ENCODE measurements at regions of chr22 and their contacts with region 1.

Region 1: GRCh38 chr22:35627264-35628041 is 10.3 kb upstream of the MB start:
- DNase-seq: peak; percentile 76
- H3K4me3 ChIP-seq: peak overlapping the region; percentile 66
- CTCF ChIP-seq: peak; percentile 69

Region 2: DNA sequence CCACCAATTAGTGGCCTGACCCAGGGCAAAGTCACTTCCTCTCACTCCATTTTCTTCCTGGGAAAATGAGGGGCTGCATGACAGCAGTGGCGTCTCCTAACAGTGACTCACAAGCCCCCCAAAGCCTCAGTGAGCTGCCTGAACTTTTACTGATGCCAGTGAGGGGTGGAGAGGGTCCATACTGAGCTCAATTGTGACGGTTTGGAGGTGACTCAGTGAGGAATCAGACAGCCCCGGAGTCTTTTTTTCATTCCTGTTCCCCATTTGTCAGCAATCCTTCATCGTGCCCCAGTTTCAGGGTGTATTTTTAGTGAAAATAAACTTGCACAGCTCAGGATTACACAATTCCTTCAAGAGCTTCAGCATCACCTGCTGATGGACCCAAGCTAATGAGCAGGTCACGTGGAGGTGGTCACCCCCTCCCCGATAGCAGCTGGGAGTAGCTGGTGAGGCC is 116.9 kb before region 1 on chr22:
- CTCF ChIA-PET with region 1: no interaction called
- POLR2A ChIA-PET with region 1: no interaction called
- DNase-seq: peak; percentile 12
- H3K4me3 ChIP-seq: no peak overlapping the region
- CTCF ChIP-seq: no peak

Region 3: DNA sequence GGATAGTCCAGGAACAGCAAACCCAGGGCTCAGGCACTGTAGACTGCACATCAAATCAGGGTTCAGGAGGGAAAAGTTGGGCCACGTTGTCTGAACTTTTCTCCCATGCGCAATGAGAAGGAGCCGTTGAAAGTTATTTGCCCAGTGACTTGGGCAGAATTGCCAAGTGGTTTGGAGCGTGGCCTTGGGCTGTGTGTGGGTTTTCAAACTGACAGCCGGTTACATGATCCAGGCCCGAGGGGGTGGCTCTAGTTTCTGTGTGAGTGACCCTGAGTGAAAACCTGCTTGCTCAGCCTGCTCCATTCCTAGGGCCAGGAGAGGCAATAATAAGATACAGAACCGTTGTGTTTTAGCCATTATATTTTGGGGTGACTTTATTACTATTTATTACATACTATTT is 30.6 kb before region 1 on chr22:
- CTCF ChIA-PET with region 1: no interaction called
- POLR2A ChIA-PET with region 1: no interaction called
- DNase-seq: no peak
- H3K4me3 ChIP-seq: no peak overlapping the region
- CTCF ChIP-seq: no peak

Region 4: GRCh38 chr22:35641494-35642120 is 14.2 kb after region 1 on chr22:
- CTCF ChIA-PET with region 1: interaction called, 16 read pairs
- POLR2A ChIA-PET with region 1: no interaction called
- DNase-seq: no peak
- H3K4me3 ChIP-seq: no peak overlapping the region
- CTCF ChIP-seq: no peak

Region 5: DNA sequence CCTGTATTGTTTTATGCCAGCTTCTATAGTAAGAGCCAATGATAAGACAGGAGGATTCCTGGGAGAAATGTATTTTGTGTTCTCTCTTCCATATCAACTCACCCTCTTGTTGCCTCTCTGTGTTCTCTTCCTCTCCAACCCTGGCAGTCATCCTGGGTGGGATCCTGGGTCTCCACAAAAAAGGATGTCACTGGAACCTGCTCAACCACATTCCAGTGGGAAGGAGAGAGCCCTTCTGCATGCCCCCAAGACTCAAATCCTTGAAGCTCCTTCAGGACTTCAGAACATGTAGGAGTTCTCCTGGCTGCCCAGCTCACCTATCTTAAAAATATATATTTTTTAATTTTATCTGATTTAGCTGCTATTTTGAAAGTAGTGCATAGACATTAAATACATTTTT is 46.9 kb after region 1 on chr22:
- CTCF ChIA-PET with region 1: no interaction called
- POLR2A ChIA-PET with region 1: no interaction called
- DNase-seq: no peak
- H3K4me3 ChIP-seq: no peak overlapping the region
- CTCF ChIP-seq: no peak

Region 6: GRCh38 chr22:35840302-35840739 is 212.9 kb after region 1 on chr22:
- CTCF ChIA-PET with region 1: interaction called, 13 read pairs
- POLR2A ChIA-PET with region 1: interaction called, 3 read pairs
- DNase-seq: peak; percentile 97
- H3K4me3 ChIP-seq: peak overlapping the region; percentile 73
- CTCF ChIP-seq: no peak

Region 7: DNA sequence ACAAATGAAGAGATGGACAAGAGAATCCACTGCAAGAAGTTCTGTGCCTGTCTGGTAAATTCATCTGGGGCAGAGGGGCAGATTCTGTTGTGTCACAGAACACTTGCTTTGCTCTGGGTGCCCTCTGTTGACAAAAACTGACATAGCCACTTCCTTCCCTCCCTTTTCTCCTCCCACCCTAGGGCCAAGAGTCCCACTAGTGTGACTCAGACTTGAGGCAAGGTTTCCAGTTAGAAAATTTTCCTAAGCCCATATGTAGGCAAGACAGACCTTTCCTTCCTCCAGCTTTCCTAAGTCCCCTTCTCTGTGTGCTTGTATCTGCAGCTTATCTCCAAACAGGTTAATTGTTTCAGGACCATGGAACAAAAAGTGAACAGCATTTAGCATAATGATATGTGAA is 294.3 kb after region 1 on chr22:
- CTCF ChIA-PET with region 1: interaction called, 29 read pairs
- POLR2A ChIA-PET with region 1: no interaction called
- DNase-seq: peak; percentile 60
- H3K4me3 ChIP-seq: no peak overlapping the region
- CTCF ChIP-seq: peak; percentile 55